CD8-positive, alpha-beta T cell (primary cell): ENCODE measurements at regions of chr5 and their contacts with region 1.

Region 1: GRCh38 chr5:94613583-94613982 is 4.8 kb downstream of the KIAA0825 start:
- DNase-seq: peak in 2 of 9 experiments; percentile 21 to 35
- ATAC-seq: no peak
- H3K4me3 ChIP-seq: no peak overlapping the region
- H3K4me3 Mint-ChIP-seq: no peak overlapping the region
- H3K27ac ChIP-seq: no peak overlapping the region
- H3K27ac Mint-ChIP-seq: no peak overlapping the region
- H3K4me1 ChIP-seq: peaks cover 9% of the 10 kb centered on the region
- H3K4me1 Mint-ChIP-seq: peaks cover 29% of the 10 kb centered on the region
- H3K27me3 ChIP-seq: no peaks in the 10 kb centered on the region
- H3K27me3 Mint-ChIP-seq: no peaks in the 10 kb centered on the region
- CTCF ChIP-seq: no peak

Region 2: DNA sequence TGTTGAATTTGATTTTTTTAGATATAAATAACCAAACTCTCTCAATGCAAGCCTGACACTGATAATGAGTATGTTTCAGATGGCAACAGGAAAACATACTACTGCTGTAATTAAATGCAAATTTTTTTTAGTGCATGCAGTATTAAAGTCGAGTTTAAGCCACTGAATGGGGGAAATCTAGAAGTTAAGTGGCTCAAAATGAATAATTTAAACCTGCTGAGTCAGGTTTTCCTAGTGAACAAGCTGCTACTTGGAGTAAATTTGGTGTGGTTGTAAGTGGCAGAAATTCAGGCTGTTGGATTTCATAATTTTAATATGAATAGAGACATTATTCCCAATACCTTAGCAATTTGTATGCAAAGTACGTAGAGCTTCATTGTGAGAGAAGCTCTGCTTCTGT is 126.7 kb after region 1 on chr5:
- CTCF ChIA-PET with region 1: interaction called, 3 read pairs
- POLR2A ChIA-PET with region 1: no interaction called
- intact Hi-C with region 1: loop called in 1 of 2 experiments (anchors 2 kb)
- DNase-seq: no peak
- ATAC-seq: no peak
- H3K4me3 ChIP-seq: no peak overlapping the region
- H3K4me3 Mint-ChIP-seq: no peak overlapping the region
- H3K27ac ChIP-seq: no peak overlapping the region
- H3K27ac Mint-ChIP-seq: no peak overlapping the region
- H3K4me1 ChIP-seq: no peaks in the 10 kb centered on the region
- H3K4me1 Mint-ChIP-seq: no peaks in the 10 kb centered on the region
- H3K27me3 ChIP-seq: no peaks in the 10 kb centered on the region
- H3K27me3 Mint-ChIP-seq: peaks cover 3% of the 10 kb centered on the region
- CTCF ChIP-seq: no peak

Region 3: GRCh38 chr5:94855543-94855942 is 242.0 kb after region 1 on chr5:
- CTCF ChIA-PET with region 1: no interaction called
- POLR2A ChIA-PET with region 1: no interaction called
- intact Hi-C with region 1: loop called in 1 of 2 experiments (anchors 2 kb)
- DNase-seq: no peak
- ATAC-seq: no peak
- H3K4me3 ChIP-seq: no peak overlapping the region
- H3K4me3 Mint-ChIP-seq: no peak overlapping the region
- H3K27ac ChIP-seq: no peak overlapping the region
- H3K27ac Mint-ChIP-seq: no peak overlapping the region
- H3K4me1 ChIP-seq: no peaks in the 10 kb centered on the region
- H3K4me1 Mint-ChIP-seq: no peaks in the 10 kb centered on the region
- H3K27me3 ChIP-seq: no peaks in the 10 kb centered on the region
- H3K27me3 Mint-ChIP-seq: no peaks in the 10 kb centered on the region
- CTCF ChIP-seq: no peak